ENCODE measurements at regions of chr1 and their contacts with region 1.

Region 1: DNA sequence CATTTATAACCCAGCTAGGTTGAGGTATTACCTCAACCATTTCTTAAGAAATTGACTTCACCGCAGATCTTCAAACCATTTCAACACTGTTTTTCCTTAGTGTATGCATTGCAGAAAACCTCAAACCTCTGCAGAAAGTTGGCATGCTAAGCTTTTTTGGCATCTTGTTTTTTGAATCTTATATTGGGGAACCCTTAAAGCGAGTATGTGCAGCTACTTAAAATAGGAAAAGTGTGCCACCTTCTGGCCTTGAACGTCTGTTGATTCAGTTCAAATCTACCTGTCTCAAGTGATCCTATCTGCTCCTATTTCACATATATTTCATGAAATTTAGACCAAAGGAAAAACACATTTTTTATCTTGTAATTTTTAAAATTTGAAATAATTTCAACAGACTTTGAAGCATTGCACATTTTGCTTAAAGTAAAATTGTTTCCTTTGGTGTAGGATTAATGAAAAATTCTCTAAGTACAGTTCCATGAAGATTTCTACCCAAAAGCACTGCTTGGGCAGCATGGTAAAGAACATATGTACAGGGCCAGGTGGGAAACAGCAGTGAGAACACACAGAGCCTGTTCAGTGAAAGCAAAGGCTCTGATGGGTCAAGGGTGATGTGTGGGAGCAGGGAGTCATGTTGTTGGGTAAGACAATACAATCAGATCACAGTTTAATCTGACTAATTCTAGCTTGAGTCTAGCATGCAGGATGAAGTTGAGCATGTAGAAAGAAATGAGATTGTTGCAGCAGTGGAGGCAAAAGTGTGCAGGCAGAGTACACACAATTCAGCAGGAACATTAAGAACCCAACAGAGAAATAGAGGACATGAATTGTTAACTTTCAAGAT is 17.2 kb downstream of the HENMT1 start:
- DNase-seq: peak in 2 of 10 donors; percentile 27 to 36

Region 2: GRCh38 chr1:108559215-108560186 is 84.2 kb before region 1 on chr1 and contains the start of gene EEIG2:
- intact Hi-C with region 1: loop called (anchors 5 kb)
- DNase-seq: peak; percentile 69 to 97 (median 77)

Region 3: DNA sequence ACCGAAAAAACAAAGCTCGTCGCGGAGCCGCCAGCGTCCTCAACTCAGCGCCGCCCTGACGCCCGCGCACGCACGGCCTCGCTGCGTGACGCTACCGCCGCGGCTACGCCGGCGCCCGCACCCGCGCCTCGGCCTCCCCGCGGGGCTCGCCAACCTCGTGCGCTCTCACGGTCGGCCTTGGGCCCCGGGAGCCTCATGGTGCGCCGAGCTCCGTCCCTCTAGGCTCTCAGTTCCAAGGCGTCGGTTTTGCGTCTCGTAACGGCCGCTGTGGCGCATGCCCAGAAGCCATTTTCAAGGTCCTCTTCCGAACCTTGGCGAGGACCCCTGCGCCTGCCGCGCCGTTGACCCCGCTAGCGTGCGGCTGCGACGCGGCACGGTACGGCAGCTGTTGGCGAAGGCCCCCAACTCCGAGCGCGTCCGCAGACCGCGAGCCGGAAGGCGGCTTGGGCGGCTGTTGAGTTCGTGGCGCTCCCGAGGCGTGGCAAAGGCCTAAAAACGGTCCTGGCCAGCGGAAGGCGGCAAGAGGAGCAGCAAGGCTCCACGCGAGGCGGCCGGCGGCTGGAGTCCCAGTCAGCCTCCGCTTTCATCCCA is 17.4 kb after region 1 on chr1 and contains the start of gene HENMT1:
- intact Hi-C with region 1: no loop called
- DNase-seq: peak; percentile 33 to 94 (median 56)